K562 (cell line): ENCODE measurements at regions of chr10 and their contacts with region 1.

Region 1: DNA sequence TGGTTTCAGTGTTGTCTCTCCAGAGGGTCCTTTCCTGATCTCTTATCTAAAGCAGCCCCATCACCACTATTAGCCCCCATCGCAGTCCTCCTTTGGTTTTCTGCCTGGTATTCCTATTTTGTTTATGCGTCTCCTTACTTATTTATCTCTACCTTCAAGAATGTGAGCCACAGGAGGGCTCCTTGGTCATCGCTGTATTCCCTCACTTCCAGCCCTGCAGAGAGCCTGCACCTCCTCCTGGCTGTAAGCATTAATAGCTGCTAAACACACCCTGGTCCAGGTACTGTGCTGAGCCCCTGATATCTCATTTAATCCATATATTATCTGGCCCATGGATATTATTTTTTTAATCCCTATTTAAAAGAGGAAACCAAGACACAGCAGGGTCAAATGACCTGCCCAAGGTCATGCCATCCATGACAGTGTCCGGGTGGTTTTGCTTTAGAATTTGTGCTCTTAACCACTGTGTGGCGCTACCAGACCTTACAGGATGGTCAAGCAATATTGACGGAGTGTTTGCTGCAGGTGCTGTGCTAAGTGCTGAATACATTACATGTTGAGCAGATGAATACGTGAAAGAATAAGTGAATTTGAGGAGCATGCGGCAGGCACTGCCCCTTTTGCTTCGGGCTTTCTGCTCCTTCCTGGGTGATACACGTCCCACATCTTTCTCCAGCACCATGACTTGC is 227.2 kb downstream of the ADAM12 start:
- DNase-seq: peak in 1 of 4 experiments; percentile 1
- ATAC-seq: no peak
- H3K4me3 ChIP-seq: no peak overlapping the region
- H3K27ac ChIP-seq: no peak overlapping the region
- H3K4me1 ChIP-seq: no peaks in the 10 kb centered on the region
- H3K27me3 ChIP-seq: no peaks in the 10 kb centered on the region; a peak in 1 of 5 replicates
- CTCF ChIP-seq: peak; percentile 26 to 52 (median 50)
- EP300 ChIP-seq: no peak
- POLR2A ChIP-seq: no peak
- RAD21 ChIP-seq: peak; percentile 58 to 60

Region 2: GRCh38 chr10:125744909-125745308 is 416.2 kb before region 1 on chr10:
- CTCF ChIA-PET with region 1: no interaction called
- POLR2A ChIA-PET with region 1: no interaction called
- in situ Hi-C with region 1: no loop called
- intact Hi-C with region 1: no loop called
- DNase-seq: no peak
- ATAC-seq: no peak
- H3K4me3 ChIP-seq: no peak overlapping the region
- H3K27ac ChIP-seq: no peak overlapping the region
- H3K4me1 ChIP-seq: no peaks in the 10 kb centered on the region
- H3K27me3 ChIP-seq: no peaks in the 10 kb centered on the region
- CTCF ChIP-seq: no peak
- EP300 ChIP-seq: no peak
- POLR2A ChIP-seq: no peak
- RAD21 ChIP-seq: no peak

Region 3: GRCh38 chr10:126302826-126303665 is 141.9 kb after region 1 on chr10:
- CTCF ChIA-PET with region 1: no interaction called
- POLR2A ChIA-PET with region 1: no interaction called
- in situ Hi-C with region 1: no loop called
- intact Hi-C with region 1: loop called (anchors 10 kb)
- DNase-seq: no peak
- ATAC-seq: no peak
- H3K4me3 ChIP-seq: no peak overlapping the region
- H3K27ac ChIP-seq: no peak overlapping the region
- H3K4me1 ChIP-seq: no peaks in the 10 kb centered on the region
- H3K27me3 ChIP-seq: no peaks in the 10 kb centered on the region
- CTCF ChIP-seq: peak in 2 of 3 experiments; percentile 14 to 43; a peak in 2 of 6 replicates
- EP300 ChIP-seq: no peak
- POLR2A ChIP-seq: no peak
- RAD21 ChIP-seq: peak; percentile 58 to 68

Region 4: GRCh38 chr10:126387023-126387921 is 226.2 kb after region 1 on chr10:
- CTCF ChIA-PET with region 1: no interaction called
- POLR2A ChIA-PET with region 1: no interaction called
- in situ Hi-C with region 1: no loop called
- intact Hi-C with region 1: loop called (anchors 2 kb)
- DNase-seq: peak; percentile 16 to 39 (median 24)
- ATAC-seq: peak; percentile 77
- H3K4me3 ChIP-seq: no peak overlapping the region
- H3K27ac ChIP-seq: no peak overlapping the region
- H3K4me1 ChIP-seq: no peaks in the 10 kb centered on the region
- H3K27me3 ChIP-seq: no peaks in the 10 kb centered on the region
- CTCF ChIP-seq: peak; percentile 43 to 59 (median 54)
- EP300 ChIP-seq: no peak
- POLR2A ChIP-seq: no peak
- RAD21 ChIP-seq: peak; percentile 27 to 46

Region 5: GRCh38 chr10:126749015-126749655 is 588.0 kb after region 1 on chr10:
- CTCF ChIA-PET with region 1: no interaction called
- POLR2A ChIA-PET with region 1: no interaction called
- in situ Hi-C with region 1: no loop called
- intact Hi-C with region 1: loop called (anchors 10 kb)
- DNase-seq: peak; percentile 17 to 53 (median 24)
- ATAC-seq: peak; percentile 81
- H3K4me3 ChIP-seq: no peak overlapping the region
- H3K27ac ChIP-seq: no peak overlapping the region
- H3K4me1 ChIP-seq: no peaks in the 10 kb centered on the region
- H3K27me3 ChIP-seq: no peaks in the 10 kb centered on the region
- CTCF ChIP-seq: peak; percentile 26 to 53 (median 50); a peak in 4 of 6 replicates
- EP300 ChIP-seq: no peak
- POLR2A ChIP-seq: no peak
- RAD21 ChIP-seq: peak; percentile 8 to 53; a peak in 2 of 4 replicates

Region 6: DNA sequence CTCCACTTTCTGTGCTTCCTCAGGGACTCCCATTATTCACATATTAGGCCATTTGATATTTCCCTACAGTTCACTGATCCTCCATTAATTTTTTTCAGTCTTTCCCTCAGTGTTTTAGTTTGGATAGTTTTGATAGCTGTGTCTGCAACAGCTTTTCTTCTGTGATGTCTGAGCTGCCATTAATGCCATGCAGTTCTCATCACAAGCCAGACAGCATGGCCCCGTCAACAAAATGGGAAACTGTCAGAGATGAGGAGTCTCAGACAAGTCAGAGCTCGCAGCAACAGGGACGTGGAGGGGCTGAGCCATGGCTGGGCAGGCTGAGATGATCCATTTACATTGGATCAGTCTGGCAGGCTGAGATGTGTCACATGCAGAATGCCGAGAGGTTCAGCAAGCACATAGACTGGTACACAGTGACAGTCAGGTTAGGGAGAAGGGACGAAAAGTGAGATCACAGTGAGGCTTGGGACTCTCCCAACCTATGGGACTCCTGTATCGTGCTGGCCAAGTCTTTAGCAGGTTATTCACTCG is 1453.4 kb after region 1 on chr10:
- CTCF ChIA-PET with region 1: no interaction called
- POLR2A ChIA-PET with region 1: no interaction called
- in situ Hi-C with region 1: no loop called
- intact Hi-C with region 1: no loop called
- DNase-seq: no peak
- ATAC-seq: no peak
- H3K4me3 ChIP-seq: no peak overlapping the region
- H3K27ac ChIP-seq: no peak overlapping the region
- H3K4me1 ChIP-seq: no peaks in the 10 kb centered on the region
- H3K27me3 ChIP-seq: no peaks in the 10 kb centered on the region
- CTCF ChIP-seq: no peak
- EP300 ChIP-seq: no peak
- POLR2A ChIP-seq: no peak
- RAD21 ChIP-seq: no peak